ENCODE measurements at regions of chr9 and their contacts with region 1.

Region 1: GRCh38 chr9:28774416-28775235 is 1201.3 kb upstream of the C9orf72 start:
- DNase-seq: no peak

Region 2: DNA sequence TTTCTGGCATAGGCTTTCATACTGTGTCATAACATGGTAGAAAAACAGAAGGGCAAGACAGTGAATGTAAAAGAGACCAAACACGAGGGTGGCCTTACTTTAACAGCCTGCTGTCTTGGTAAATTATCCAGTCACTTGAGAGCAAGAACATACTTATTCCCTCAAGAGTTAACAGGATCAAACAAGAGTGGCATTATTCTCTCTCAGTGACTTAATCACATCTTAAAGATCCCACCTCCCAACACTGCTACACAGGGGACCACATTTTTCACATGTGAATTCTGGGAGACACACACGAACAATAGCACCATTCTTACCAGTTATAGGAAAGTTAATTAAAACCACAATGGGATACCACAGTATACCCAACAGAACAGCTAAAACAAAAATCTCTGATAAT is 303.4 kb before region 1 on chr9:
- intact Hi-C with region 1: no loop called
- DNase-seq: no peak

Region 3: GRCh38 chr9:28720746-28721145 is 53.9 kb before region 1 on chr9:
- intact Hi-C with region 1: no loop called
- DNase-seq: no peak

Region 4: GRCh38 chr9:29211580-29212396 is 437.2 kb after region 1 on chr9:
- intact Hi-C with region 1: loop called (anchors 10 kb)
- DNase-seq: peak; percentile 41 to 94 (median 60)

Measured in posterior cingulate gyrus (tissue), 11 donors.